Mammary epithelial cell (primary cell): ENCODE measurements at regions of chr1 and their contacts with region 1.

Region 1: DNA sequence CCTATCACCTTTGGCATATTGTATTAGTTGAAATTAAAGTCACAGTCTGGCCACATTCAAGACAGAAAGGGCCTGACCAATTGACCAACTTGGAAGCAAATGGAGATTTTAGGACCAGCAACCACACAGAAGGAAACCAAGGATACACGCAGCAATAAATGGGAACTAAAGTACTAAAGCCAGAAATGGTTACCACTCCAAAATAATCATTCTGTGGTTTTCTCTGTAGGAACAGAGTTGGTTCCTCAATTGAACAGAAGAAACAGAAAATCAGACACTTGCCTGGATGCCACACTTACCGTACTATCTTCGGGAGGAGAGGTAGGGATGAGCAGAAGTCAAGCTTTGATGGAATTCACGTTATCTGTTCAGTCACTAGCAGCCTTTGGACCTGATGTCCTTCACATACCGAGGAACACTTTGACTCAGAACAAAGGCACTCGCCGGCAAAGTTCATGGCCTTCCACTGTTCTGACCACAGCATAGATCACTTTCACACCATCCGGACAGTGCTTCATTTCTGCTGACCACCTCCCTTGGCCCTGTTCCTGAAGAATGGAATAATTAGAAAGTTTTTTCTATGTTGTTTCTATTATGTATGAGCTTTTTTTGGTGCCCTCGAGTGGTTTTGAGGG is 96.9 kb downstream of the LPAR3 start:
- DNase-seq: no peak
- H3K4me3 ChIP-seq: no peak overlapping the region
- H3K27ac ChIP-seq: no peak overlapping the region
- H3K4me1 ChIP-seq: peaks cover 4% of the 10 kb centered on the region
- H3K27me3 ChIP-seq: no peaks in the 10 kb centered on the region
- CTCF ChIP-seq: no peak

Region 2: GRCh38 chr1:84887261-84887934 is 91.3 kb after region 1 on chr1:
- CTCF ChIA-PET with region 1: no interaction called
- dilution Hi-C with region 1: no loop called
- in situ Hi-C with region 1: no loop called
- intact Hi-C with region 1: no loop called
- DNase-seq: peak; percentile 94
- H3K4me3 ChIP-seq: peak overlapping the region in 1 of 3 experiments; percentile 3
- H3K27ac ChIP-seq: peak overlapping the region; percentile 92
- H3K4me1 ChIP-seq: peaks cover 45% of the 10 kb centered on the region
- H3K27me3 ChIP-seq: no peaks in the 10 kb centered on the region
- CTCF ChIP-seq: no peak

Region 3: GRCh38 chr1:84920159-84920558 is 124.1 kb after region 1 on chr1:
- CTCF ChIA-PET with region 1: no interaction called
- dilution Hi-C with region 1: loop called (anchors 5 kb)
- in situ Hi-C with region 1: no loop called
- intact Hi-C with region 1: no loop called
- DNase-seq: no peak
- H3K4me3 ChIP-seq: no peak overlapping the region
- H3K27ac ChIP-seq: no peak overlapping the region
- H3K4me1 ChIP-seq: no peaks in the 10 kb centered on the region
- H3K27me3 ChIP-seq: no peaks in the 10 kb centered on the region
- CTCF ChIP-seq: no peak